B cell (primary cell): ENCODE measurements at regions of chr5 and their contacts with region 1.

Region 1: GRCh38 chr5:138241688-138242571 is 28.8 kb upstream of the CDC23 start:
- DNase-seq: peak; percentile 53
- ATAC-seq: no peak
- H3K4me3 ChIP-seq: peak overlapping the region in 3 of 5 experiments; percentile 36 to 56 (median 49)
- H3K4me3 Mint-ChIP-seq: peak overlapping the region; percentile 83
- H3K27ac ChIP-seq: no peak overlapping the region
- H3K27ac Mint-ChIP-seq: no peak overlapping the region
- H3K4me1 ChIP-seq: peaks cover 17 to 21% of the 10 kb centered on the region in 2 donors
- H3K4me1 Mint-ChIP-seq: peaks cover 19% of the 10 kb centered on the region
- H3K27me3 ChIP-seq: peaks cover 0 to 52% (median 41%) of the 10 kb centered on the region in 4 experiments
- H3K27me3 Mint-ChIP-seq: peaks cover 47% of the 10 kb centered on the region
- CTCF ChIP-seq: no peak

Region 2: DNA sequence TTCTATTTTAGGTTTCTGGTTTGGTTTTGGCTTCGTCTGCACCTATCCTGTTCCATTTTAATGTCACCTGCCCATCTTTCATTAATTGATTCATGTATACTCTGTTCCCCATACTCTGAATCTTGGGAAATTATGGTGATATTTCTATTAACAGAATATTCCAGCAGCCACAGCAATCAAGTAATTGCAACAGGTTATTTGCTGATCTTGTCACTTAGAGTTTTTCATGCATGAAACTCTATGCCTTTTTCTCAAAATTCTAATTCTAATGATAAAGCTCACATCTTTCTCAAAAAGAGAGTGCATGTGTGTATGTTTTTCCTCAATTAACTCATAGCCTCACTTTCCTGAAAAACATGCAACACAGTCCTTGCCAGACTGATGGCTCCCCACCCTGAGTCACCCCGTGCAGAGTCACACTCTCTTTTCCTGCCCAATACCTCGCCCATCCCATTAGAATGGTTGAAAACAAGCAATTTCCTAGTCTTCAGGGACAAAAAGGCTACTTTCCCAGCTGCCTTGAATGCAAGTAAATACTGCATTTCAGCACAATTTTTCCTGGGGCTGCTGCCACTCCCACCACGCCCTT is 16.9 kb after region 1 on chr5:
- CTCF ChIA-PET with region 1: no interaction called
- POLR2A ChIA-PET with region 1: interaction called, 10 read pairs
- intact Hi-C with region 1: no loop called
- DNase-seq: no peak
- ATAC-seq: no peak
- H3K4me3 ChIP-seq: no peak overlapping the region
- H3K4me3 Mint-ChIP-seq: no peak overlapping the region
- H3K27ac ChIP-seq: no peak overlapping the region
- H3K27ac Mint-ChIP-seq: no peak overlapping the region
- H3K4me1 ChIP-seq: no peaks in the 10 kb centered on the region
- H3K4me1 Mint-ChIP-seq: no peaks in the 10 kb centered on the region
- H3K27me3 ChIP-seq: no peaks in the 10 kb centered on the region
- H3K27me3 Mint-ChIP-seq: no peaks in the 10 kb centered on the region
- CTCF ChIP-seq: no peak